ENCODE measurements at regions of chr1 and their contacts with region 1.

Region 1: DNA sequence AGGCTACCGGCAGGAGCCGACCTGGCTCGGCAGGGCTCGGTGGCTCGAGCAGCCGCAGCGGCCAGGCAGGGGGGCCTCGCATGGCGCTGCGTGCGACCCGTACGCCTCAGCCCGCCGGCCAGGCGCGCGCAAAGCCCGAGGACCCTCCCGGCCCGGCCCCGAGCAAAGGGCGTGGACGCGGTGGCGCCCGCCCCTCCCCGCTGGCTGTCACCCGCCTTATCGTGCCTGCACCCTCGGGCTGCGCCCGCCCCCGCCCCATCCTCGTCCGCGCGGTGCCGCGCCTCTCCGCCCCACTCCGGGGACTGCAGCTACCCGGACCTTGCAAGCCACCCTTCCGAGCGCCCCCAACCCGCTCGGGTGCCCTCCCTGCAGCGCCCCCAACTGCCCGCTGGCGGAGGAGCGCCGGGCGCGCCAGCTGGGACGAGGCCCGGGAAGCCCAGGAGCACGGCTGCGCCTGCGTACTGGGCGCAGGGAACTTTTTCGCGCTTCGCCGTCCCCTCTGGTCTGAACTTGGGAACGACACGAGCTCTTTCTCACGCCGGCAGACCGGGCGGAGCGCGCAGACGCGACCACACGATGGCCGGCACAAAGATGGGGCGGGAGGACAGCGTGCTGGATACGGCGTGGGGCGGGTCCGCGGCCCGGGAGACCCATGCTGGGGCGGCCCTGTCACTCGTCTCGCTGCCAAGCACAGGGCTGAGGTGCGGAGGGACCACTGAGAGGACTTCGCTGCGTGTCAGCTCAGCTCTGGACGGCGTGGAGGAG is at the start of gene ABCB10:
- DNase-seq: peak; percentile 97 to 100 (median 98)
- ATAC-seq: peak; percentile 84
- H3K4me3 ChIP-seq: peak within 1 kb of the TSS; percentile 79
- H3K27ac ChIP-seq: peak within 1 kb of the TSS; percentile 77
- H3K4me1 ChIP-seq: peaks cover 27 to 41% of the 10 kb centered on the region in 2 experiments; a peak in 4 of 5 replicates
- H3K27me3 ChIP-seq: no peaks in the 10 kb centered on the region; a peak in 1 of 5 replicates
- CTCF ChIP-seq: peak; percentile 97 to 98 (median 98)
- EP300 ChIP-seq: 0 out of 2 replicates have a peak, but pooled peaks have one; percentile 3
- POLR2A ChIP-seq: peak; percentile 84
- RAD21 ChIP-seq: peak; percentile 55 to 56
- polyA plus RNA-seq, gene ABCB10: 12.4 to 16.5 TPM

Region 2: DNA sequence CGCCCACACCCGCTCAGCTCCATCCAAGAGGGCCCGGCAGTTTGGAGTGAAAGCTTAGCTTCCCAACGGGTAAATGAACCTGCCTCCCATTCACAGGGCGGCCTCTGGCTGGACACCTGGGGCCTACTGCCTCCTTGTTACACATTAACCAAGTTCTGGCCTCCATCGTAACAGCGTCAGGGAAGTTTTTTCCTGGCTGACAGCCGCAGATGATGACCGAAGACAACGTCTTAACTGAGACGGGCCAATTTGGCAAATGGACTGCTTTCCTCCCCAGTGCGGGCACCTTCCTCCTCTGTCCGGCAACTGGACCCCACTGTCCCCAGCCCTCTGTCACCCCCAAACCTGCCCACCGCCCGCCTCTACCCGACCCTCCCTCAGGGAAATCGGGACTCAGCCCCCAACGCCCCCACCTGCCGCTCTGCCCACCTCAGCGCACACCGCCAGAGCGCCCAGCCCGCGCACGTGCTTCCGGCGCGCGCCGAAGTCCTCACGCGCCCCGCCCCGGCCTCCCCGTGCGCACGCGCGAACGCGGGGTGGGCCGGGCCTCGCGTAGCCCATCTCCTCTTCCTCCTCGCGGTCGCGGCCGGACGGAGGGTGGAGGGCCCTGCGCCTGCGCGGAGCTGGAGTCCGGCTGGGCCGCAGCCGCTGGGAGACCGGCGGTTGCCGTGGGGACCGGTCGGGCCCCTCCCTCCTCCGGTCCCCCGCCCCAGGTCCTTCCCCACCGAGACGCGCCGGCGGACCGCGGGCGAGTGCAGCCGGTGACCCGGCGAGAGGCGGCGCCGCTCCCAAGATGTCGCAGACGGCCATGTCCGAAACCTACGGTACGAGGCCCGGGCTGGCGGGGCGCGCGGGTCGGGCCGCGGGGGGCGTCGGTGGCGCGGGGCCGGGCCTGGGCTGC is 288.0 kb before region 1 on chr1 and contains the start of gene RAB4A:
- CTCF ChIA-PET with region 1: no interaction called
- POLR2A ChIA-PET with region 1: interaction called, 4 read pairs
- in situ Hi-C with region 1: no loop called
- intact Hi-C with region 1: loop called (anchors 5 kb)
- DNase-seq: peak; percentile 96 to 100 (median 100)
- ATAC-seq: peak; percentile 96
- H3K4me3 ChIP-seq: peak within 1 kb of the TSS; percentile 78
- H3K27ac ChIP-seq: peak within 1 kb of the TSS; percentile 43
- H3K4me1 ChIP-seq: peaks cover 20 to 41% of the 10 kb centered on the region in 2 experiments; a peak in 4 of 5 replicates
- H3K27me3 ChIP-seq: no peaks in the 10 kb centered on the region; a peak in 1 of 5 replicates
- CTCF ChIP-seq: no peak
- EP300 ChIP-seq: no peak
- POLR2A ChIP-seq: peak; percentile 74
- RAD21 ChIP-seq: 0 out of 4 replicates have a peak, but pooled peaks of 1 of the 2 experiments have one; percentile 5
- polyA plus RNA-seq, gene RAB4A: 8.3 to 9.7 TPM

Region 3: DNA sequence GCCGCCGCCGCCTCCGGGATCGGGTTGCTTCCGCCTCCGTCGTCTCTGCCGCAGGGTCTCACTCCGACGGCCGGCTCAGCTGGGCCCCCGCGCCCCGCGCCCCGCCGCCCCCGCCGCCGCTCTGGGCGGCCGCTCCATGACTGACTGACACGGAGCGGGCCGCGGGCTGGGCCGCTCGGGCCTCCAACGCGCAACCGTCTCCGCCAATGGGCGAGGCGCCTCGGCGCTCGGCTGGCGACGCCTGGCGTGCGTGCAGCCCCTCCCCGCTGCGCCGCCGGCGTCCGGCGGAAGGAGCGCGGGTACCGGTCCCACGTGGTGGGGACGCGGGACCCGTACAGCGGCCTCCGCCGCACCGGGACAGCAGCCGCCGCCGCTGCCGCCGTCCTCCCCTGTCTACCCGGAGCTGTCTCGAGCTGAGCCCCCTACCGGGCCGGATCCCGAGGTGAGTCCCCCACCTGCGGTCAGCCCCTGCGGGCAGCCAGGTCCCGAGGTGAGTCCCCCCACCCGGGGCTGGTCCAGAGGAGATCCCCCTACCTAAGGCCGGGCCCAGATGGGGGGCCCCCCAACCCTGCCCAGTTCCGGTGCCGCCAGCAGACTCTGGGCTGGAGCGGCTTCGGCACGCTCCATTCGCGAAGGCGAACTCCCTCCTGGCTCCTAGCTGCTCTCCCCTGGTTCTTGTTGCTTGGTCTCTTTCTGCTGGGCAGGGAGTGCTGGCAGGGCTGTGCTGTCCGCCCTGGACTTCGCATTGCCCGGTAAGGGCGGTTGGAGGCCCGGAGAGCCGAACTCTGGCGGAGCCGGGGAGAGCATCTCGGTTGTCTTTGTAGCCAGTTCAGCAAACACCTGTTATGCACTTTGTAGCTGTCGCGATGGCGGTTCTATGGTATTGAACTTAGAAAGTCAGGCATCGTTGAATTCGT is 67.4 kb after region 1 on chr1 and contains the starts of genes TAF5L and URB2:
- CTCF ChIA-PET with region 1: interaction called, 3 read pairs
- POLR2A ChIA-PET with region 1: interaction called, 6 read pairs
- in situ Hi-C with region 1: no loop called
- intact Hi-C with region 1: loop called (anchors 1 kb)
- DNase-seq: peak; percentile 92 to 97 (median 94)
- ATAC-seq: peak; percentile 95
- H3K4me3 ChIP-seq: peak within 1 kb of the TSS; percentile 79
- H3K27ac ChIP-seq: peak within 1 kb of the TSS; percentile 73
- H3K4me1 ChIP-seq: peaks cover 15% of the 10 kb centered on the region in 2 experiments; a peak in 4 of 5 replicates
- H3K27me3 ChIP-seq: no peaks in the 10 kb centered on the region
- CTCF ChIP-seq: 0 out of 6 replicates have a peak, but pooled peaks of 1 of the 3 experiments have one; percentile 3
- EP300 ChIP-seq: peak; percentile 32; the same call in 1 of the 2 replicates
- POLR2A ChIP-seq: peak; percentile 84
- RAD21 ChIP-seq: no peak
- polyA plus RNA-seq, gene TAF5L: 2.2 to 3.2 TPM
- polyA plus RNA-seq, gene URB2: 2.8 to 3.8 TPM

Measured in K562 (cell line).